ENCODE measurements at regions of chr5 and their contacts with region 1.

Region 1: DNA sequence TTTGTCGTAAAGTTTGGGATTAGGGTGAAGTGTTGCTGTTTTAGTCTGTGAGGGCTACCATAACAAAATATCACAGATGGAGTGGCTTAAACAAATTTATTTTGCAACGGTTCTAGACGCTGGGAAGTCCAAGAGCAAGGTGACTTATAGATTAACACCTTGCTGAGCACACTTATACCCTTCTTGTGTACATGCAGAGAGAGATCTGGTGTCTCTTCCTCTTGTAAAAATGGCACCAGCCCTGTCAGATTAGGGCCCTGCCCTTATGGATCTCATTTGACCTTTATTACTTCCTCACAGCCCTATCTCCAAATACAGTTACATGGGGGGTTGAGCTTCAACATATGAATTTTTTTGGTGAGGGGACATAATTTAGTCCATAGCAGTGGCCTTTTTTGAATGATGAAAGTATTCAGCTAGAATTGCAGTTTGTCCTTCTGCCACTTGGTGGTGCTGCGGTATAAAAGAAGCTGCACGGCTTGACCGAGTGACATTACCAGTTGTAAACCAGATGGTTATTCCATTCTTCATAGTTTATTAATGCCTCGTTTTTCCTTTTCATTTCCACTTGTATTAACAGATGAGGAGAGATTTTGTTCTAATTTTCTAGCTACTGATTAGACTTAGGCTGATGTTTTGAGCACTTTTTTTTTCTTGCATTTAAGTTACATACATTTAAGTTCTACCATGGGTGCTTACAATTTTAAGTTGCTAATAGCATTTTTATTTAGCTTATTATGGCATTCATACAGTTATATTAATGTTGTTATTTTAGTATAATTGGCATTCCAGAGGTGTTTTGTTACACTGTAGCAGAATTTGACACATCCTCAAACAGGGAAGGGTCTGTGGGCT is 19.4 kb downstream of the DCP2 start:
- DNase-seq: peak; percentile 69
- ATAC-seq: peak; percentile 91

Region 2: DNA sequence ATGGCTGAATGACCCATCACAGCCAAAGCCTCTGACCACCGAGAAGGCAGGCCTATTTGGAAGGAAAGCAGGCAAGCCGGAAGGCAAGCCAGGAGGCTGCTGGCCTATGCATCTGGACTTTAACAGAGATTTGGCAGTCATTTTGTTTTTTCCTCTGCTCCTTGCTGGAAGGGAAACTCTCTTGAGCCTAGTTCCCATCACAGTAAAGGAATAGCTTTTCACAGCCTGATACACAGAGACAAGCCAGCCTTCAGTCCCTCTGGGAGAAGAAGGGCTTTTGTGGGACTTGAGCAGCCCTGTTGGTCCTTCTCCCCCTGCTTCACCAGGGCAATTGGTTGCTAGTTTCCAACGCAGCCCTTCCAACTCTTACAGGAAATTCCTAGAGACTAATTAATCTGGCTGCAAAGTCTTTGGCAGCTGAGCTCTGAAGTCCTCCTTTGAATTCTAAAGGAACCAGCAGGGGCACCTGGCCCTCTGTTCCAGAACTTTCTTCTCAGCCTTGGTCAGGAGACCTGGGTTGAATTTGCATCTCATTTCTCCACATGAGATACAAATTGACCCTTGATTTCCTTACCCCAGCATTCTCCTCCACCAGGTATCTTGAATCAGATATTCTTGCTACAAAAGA is 419.6 kb before region 1 on chr5:
- intact Hi-C with region 1: no loop called
- DNase-seq: peak; percentile 59
- ATAC-seq: peak; percentile 73

Region 3: DNA sequence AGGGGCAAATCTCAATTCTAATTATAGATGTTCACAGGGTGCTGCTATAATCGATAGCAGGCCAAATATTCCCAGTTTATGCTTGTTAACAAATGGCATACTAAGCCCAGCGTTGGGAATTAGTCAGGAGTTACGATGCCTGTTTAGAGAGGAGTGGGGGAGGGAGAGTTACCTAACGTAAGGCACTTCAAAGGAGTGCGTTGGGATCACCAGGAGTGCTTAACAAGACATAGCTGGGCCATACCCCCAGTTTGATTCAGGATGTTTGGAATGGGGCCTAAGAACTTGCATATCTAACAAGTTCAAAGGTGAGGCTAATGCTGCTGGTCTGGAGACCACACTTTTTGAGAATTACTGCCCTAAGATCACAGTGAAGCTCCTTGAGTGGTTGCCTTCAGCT is 149.4 kb before region 1 on chr5:
- intact Hi-C with region 1: no loop called
- DNase-seq: no peak
- ATAC-seq: peak; percentile 26

Region 4: GRCh38 chr5:113330533-113331208 is 334.7 kb after region 1 on chr5:
- intact Hi-C with region 1: loop called (anchors 2 kb)
- DNase-seq: peak; percentile 73
- ATAC-seq: peak; percentile 82

Region 5: DNA sequence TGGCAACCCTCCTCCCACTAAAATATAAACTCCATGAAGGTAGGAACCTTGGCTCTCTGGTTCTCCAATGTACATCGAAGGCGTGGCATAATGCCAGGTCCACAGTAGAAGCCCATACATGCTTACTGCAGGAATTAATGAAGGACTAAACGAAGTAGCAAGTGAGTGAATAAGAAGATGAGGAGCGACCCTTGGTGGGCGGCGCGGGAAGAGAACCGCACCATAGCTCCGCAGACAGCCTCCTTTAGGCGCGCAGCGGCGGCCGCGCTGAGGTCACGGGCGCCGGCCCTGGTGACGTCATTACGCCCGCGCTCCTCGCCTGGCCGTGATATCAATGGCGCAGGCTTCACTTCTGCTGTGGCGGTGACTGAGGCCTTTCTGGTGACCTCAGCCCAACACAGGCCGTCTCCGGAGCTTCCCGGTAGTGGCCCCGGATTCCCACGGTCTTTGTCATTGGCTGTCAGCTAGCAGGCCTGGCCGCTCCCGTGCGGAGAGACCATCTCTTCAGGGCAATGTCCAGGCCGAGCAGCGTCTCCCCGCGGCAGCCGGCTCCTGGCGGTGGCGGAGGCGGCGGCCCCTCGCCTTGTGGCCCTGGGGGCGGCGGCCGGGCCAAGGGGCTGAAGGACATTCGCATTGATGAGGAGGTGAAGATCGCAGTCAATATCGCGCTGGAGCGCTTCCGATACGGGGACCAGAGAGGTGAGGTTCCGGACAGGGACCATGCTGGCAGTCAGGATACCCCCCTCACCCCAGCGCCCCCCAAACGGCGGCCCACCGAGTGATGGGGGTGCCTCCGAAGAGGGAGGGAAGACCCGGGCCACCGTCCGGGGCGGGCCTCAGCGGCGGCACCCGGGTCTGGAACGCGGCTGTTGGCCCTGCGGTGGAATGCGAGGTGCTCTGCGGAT is 517.6 kb after region 1 on chr5 and contains the start of gene YTHDC2:
- intact Hi-C with region 1: loop called (anchors 5 kb)
- DNase-seq: peak; percentile 94
- ATAC-seq: peak; percentile 99
- total RNA-seq, gene YTHDC2: 12.9 TPM

Region 6: DNA sequence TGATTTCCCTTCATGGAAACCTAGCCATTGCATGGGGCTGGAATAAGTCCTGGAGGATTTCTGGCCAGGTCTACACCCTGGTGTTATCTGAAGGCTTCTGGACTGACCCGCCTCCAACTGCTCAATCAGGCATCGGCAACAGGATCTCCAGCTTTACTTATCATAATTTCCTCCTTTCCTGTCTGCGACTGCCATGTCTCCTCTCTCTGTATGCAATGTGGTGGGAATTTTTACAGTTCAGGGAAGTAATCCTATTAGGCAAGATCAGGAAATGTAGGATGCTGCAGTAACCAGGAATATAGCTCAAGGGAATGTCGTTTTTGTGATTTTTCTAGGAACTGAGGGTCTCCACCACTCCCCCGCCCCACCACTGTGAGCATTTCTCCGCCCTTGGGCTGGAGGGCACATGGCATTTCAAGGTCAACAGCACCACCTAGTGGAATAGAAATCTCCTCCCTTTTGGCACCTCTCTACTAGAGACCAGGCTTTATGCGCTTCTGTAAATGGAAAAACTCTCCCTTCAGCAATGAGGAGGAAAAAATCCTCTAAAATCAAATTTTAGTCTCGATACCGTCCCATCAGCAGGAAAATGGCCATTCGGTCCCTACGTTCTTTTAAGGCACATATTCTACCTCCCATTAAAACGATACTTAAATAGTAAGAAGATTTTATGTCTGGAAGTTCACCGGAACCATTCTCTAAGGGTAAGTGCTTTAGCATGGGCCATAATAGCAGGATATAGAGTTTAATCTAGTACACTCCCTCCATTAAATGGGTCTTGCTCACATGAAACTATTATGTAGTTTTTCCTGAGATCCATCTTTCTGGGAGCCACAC is 610.5 kb after region 1 on chr5:
- intact Hi-C with region 1: loop called (anchors 5 kb)
- DNase-seq: no peak
- ATAC-seq: peak; percentile 96